CD14-positive monocyte (primary cell): ENCODE measurements at regions of chr17 and their contacts with region 1.

Region 1: DNA sequence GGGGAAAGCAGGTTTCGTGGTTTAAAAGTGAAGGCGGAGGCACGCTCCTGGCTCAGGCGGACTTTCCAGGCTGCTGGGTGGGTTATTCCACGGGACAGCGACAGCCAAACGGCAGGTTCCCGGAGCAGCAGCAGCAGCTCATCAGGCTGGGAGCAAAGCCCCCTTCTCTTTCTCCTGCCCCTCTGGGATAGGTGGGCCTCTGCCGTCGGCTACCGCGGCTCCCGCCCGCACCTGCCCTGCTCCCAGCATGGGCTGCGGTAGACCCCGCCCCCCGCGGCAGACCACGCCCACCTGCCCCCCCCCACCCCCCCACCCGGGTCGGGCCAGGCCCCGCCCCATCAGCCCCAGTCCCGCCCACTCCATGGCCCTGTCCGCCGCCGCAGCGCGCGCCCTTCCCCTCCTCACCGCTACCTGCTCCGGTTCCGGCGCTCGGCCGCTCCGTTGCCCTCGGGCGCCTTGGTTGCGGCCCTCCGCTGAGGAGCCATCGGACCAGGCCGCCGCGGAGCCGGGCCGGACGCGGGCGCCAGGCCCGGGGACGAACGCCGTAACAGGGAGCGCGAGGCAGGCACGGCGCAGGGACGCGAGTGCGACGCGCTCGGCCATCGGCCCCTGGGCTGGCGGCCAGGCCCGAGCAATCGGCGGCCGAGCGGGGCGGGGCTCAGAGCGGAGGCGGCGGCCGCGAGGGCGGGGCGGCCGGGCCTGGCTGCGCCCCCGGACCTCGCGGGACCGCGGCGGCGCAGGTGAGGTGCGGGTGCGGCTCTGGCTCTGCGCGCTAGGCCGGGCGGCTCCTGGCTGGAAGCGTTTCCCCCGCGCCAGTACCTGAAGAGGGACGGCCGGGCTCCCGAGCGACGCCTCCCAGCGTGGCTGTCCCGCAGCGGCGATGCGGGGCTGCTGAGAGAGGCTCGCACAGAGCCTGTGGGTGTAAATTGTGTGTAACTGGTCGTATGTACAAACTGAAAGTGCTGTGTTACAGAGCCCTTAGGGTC is at the starts of genes HEXD and OGFOD3:
- DNase-seq: peak; percentile 73 to 75 (median 75)
- H3K4me3 ChIP-seq: peak within 1 kb of the TSS; percentile 65 to 98 (median 96)
- H3K4me3 Mint-ChIP-seq: peak within 1 kb of the TSS; percentile 85 to 90
- H3K27ac ChIP-seq: peak within 1 kb of the TSS in 1 of 2 donors; percentile 66
- H3K27ac Mint-ChIP-seq: peak within 1 kb of the TSS in 4 of 7 donors; percentile 40 to 85 (median 60)
- H3K4me1 ChIP-seq: peaks cover 23 to 24% of the 10 kb centered on the region in 2 donors
- H3K4me1 Mint-ChIP-seq: peaks cover 23% of the 10 kb centered on the region
- H3K27me3 ChIP-seq: no peaks in the 10 kb centered on the region
- H3K27me3 Mint-ChIP-seq: no peaks in the 10 kb centered on the region
- CTCF ChIP-seq: no peak
- polyA plus RNA-seq, gene HEXD: 8.9 to 61.5 (median 12.7) TPM
- polyA plus RNA-seq, gene OGFOD3: 17.9 to 36.4 (median 25.2) TPM

Region 2: DNA sequence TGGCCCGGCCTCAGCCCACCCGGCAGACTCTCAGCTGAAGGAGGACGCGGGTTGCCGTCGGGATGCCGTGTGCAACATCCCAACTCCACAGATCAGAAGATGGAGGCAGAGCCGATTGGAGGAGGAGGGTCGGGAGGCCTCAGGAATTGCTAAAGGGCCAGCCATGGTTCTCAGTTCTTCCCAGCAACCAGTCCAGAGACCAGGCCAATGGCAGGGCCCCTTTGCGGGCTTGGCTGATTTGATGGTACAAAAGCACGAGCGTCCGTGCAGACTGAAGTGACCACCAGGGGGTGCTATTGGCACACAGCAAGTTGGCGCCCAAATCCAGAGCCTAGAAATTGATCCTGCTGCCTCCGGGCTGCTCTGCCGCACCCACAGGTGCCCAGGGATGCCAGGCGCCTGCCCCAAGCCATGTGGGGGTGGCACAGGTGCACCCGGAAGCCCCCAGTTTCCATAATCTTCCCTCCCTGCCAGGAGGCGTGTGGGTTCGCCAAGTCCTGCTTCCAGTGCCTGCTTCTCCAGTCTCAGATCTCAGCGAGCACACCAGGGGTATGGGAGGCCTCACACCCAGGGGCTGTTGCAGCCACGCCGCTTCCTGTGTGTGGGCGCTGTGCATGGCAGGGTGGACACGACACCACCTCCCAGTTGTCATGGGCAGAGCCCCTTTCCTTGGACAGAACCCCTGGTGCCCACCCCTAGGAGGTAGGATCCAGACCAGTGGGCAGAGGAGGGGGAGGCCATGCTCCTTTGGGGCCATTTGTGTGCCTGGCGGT is 66.4 kb before region 1 on chr17:
- intact Hi-C with region 1: loop called (anchors 5 kb)
- DNase-seq: peak; percentile 77 to 82 (median 80)
- H3K4me3 ChIP-seq: no peak overlapping the region
- H3K4me3 Mint-ChIP-seq: no peak overlapping the region
- H3K27ac ChIP-seq: no peak overlapping the region
- H3K27ac Mint-ChIP-seq: peak overlapping the region in 1 of 7 donors; percentile 48
- H3K4me1 ChIP-seq: peaks cover 1 to 3% of the 10 kb centered on the region in 2 donors
- H3K4me1 Mint-ChIP-seq: peaks cover 3% of the 10 kb centered on the region
- H3K27me3 ChIP-seq: peaks cover 0 to 2% of the 10 kb centered on the region in 2 donors
- H3K27me3 Mint-ChIP-seq: peaks cover 4 to 12% (median 6%) of the 10 kb centered on the region in 3 donors
- CTCF ChIP-seq: peak; percentile 94

Region 3: DNA sequence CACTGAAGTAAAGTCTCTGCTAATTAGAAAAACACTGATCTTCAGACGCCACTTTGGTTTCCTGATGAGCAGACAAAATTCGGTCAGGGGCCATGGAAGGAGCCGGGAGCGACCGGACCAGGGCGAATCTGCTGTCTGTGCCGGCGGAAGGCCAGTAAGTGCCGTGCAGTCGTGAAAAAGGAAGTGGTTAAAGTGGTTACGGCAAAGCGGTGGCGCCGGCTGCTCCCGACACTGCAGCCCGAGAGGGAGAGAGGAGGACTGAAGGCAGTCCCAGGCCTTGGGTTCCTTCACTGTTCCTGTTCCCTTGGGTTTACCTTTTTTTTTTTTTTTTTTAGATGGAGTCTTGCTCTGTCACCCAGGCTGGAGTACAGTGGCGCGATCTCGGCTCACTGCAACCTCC is 17.5 kb before region 1 on chr17:
- intact Hi-C with region 1: no loop called
- DNase-seq: peak; percentile 70 to 84 (median 82)
- H3K4me3 ChIP-seq: peak overlapping the region; percentile 13 to 66 (median 22)
- H3K4me3 Mint-ChIP-seq: peak overlapping the region; percentile 84 to 94
- H3K27ac ChIP-seq: peak overlapping the region; percentile 47 to 66
- H3K27ac Mint-ChIP-seq: peak overlapping the region; percentile 78 to 94 (median 88)
- H3K4me1 ChIP-seq: peaks cover 28 to 30% of the 10 kb centered on the region in 2 donors
- H3K4me1 Mint-ChIP-seq: peaks cover 27% of the 10 kb centered on the region
- H3K27me3 ChIP-seq: no peaks in the 10 kb centered on the region
- H3K27me3 Mint-ChIP-seq: peaks cover 1 to 6% (median 3%) of the 10 kb centered on the region in 3 donors
- CTCF ChIP-seq: no peak

Region 4: GRCh38 chr17:82450170-82451106 is 32.1 kb after region 1 on chr17 and contains the start of gene CYBC1:
- intact Hi-C with region 1: loop called (anchors 1 to 2 kb)
- DNase-seq: peak; percentile 87 to 93 (median 91)
- H3K4me3 ChIP-seq: peak within 1 kb of the TSS; percentile 78 to 100 (median 79)
- H3K4me3 Mint-ChIP-seq: peak within 1 kb of the TSS; percentile 93 to 99
- H3K27ac ChIP-seq: peak within 1 kb of the TSS; percentile 79 to 87
- H3K27ac Mint-ChIP-seq: peak within 1 kb of the TSS; percentile 80 to 97 (median 93)
- H3K4me1 ChIP-seq: peaks cover 28 to 38% of the 10 kb centered on the region in 2 donors
- H3K4me1 Mint-ChIP-seq: peaks cover 24% of the 10 kb centered on the region
- H3K27me3 ChIP-seq: no peaks in the 10 kb centered on the region
- H3K27me3 Mint-ChIP-seq: peaks cover 0 to 1% (median 0%) of the 10 kb centered on the region in 3 donors
- CTCF ChIP-seq: no peak
- polyA plus RNA-seq, gene CYBC1: 160 to 225 (median 217) TPM

Region 5: GRCh38 chr17:82494236-82495055 is 76.2 kb after region 1 on chr17:
- intact Hi-C with region 1: no loop called
- DNase-seq: peak; percentile 77 to 90 (median 83)
- H3K4me3 ChIP-seq: no peak overlapping the region
- H3K4me3 Mint-ChIP-seq: peak overlapping the region in 1 of 2 donors; percentile 12
- H3K27ac ChIP-seq: peak overlapping the region; percentile 32 to 44
- H3K27ac Mint-ChIP-seq: peak overlapping the region; percentile 21 to 82 (median 53)
- H3K4me1 ChIP-seq: peaks cover 23 to 30% of the 10 kb centered on the region in 2 donors
- H3K4me1 Mint-ChIP-seq: peaks cover 30% of the 10 kb centered on the region
- H3K27me3 ChIP-seq: no peaks in the 10 kb centered on the region
- H3K27me3 Mint-ChIP-seq: peaks cover 0 to 7% (median 0%) of the 10 kb centered on the region in 3 donors
- CTCF ChIP-seq: peak; percentile 82